ENCODE measurements at regions of chr20 and their contacts with region 1.

Region 1: GRCh38 chr20:5430670-5431069 is 113.9 kb upstream of the PROKR2 start:
- DNase-seq: no peak
- ATAC-seq: no peak
- H3K4me3 ChIP-seq: no peak overlapping the region
- H3K27ac ChIP-seq: no peak overlapping the region
- H3K4me1 ChIP-seq: no peaks in the 10 kb centered on the region
- H3K27me3 ChIP-seq: peaks cover 7% of the 10 kb centered on the region
- CTCF ChIP-seq: peak; percentile 19; the same call in 1 of the 2 replicates

Region 2: DNA sequence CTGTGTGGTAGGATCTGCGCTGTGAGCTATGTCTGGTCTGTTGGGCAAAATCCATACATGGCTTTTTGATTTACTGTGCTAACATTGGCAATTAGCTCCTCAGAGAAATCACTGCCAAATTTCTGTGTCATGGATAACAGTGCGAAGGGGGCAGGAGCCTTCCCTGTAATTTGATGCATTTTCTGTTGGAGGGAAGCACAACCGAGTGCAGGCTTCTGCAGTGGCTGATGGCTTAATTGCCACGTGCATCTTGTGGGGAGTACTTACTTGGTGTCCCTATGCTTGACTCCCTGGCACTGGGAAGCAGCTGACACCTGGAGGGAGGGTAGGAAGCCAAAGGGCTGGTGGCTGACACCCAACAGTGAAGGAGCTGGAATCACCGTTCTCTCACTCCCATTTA is 14.6 kb before region 1 on chr20:
- CTCF ChIA-PET with region 1: no interaction called
- POLR2A ChIA-PET with region 1: interaction called, 10 read pairs
- in situ Hi-C with region 1: no loop called
- intact Hi-C with region 1: no loop called
- DNase-seq: no peak
- ATAC-seq: no peak
- H3K4me3 ChIP-seq: no peak overlapping the region
- H3K27ac ChIP-seq: no peak overlapping the region
- H3K4me1 ChIP-seq: no peaks in the 10 kb centered on the region
- H3K27me3 ChIP-seq: peaks cover 5% of the 10 kb centered on the region
- CTCF ChIP-seq: no peak

Measured in Panc1 (cell line).